ENCODE measurements at regions of chr20 and their contacts with region 1.

Region 1: GRCh38 chr20:30376767-30377666 is 880.4 kb upstream of the DEFB115 start:
- DNase-seq: peak; percentile 85
- H3K4me3 Mint-ChIP-seq: peak overlapping the region; percentile 94
- H3K27ac Mint-ChIP-seq: peak overlapping the region; percentile 95
- H3K4me1 Mint-ChIP-seq: peaks cover 25% of the 10 kb centered on the region
- H3K27me3 Mint-ChIP-seq: no peaks in the 10 kb centered on the region

Region 2: DNA sequence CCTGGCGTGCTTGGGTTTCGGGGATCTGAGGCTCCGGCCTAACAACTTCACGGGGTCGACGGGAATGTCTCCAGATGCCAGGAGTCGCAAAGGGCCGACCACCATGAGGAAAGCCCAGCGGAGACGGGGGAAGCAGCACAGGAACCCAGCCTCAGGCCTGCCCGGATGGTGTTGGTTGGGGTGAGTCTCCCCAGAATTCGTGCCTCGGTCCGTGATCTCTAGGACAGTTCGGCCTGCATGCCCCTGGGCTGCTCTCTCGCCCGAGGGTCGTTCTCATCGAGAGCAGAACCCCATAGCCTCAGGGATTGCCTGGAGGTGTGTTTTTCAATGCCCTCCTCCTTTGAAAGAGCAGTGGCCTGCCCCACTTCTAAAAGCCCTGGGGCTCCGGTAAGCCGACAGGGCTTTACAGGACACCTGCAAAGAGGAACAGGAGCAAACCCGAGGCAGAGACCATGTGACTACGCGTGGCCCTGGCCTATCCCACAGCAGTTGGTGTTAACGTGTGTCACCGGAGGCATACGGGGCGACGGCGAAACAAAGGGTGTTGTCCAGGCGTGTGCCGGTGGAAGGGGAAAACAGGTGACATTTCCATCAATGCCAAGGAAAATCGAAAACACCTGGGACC is 92.6 kb before region 1 on chr20:
- intact Hi-C with region 1: loop called (anchors 2 kb)
- DNase-seq: no peak
- H3K4me3 Mint-ChIP-seq: peak overlapping the region; percentile 83
- H3K27ac Mint-ChIP-seq: no peak overlapping the region
- H3K4me1 Mint-ChIP-seq: peaks cover 32% of the 10 kb centered on the region
- H3K27me3 Mint-ChIP-seq: no peaks in the 10 kb centered on the region

Region 3: GRCh38 chr20:30593572-30593971 is 216.6 kb after region 1 on chr20:
- intact Hi-C with region 1: no loop called
- DNase-seq: no peak
- H3K4me3 Mint-ChIP-seq: no peak overlapping the region
- H3K27ac Mint-ChIP-seq: no peak overlapping the region
- H3K4me1 Mint-ChIP-seq: no peaks in the 10 kb centered on the region
- H3K27me3 Mint-ChIP-seq: no peaks in the 10 kb centered on the region

Measured in activated T-helper 2 cell treated with anti-CD3 and anti-CD28 coated beads, Interferon-gamma antibody, Interleukin-2, Interleukin-4, amounts not matched to agents 10 μg/mL and 5 μg/mL and 100 μg/mL, durations not matched to agents 14 hours and 24 hours and 36 hours (primary cell).